AG04450 (cell line): ENCODE measurements at regions of chr6 and their contacts with region 1.

Region 1: GRCh38 chr6:30877419-30878371 is 6.6 kb upstream of the DDR1 start:
- DNase-seq: peak; percentile 71
- H3K4me3 ChIP-seq: peak overlapping the region; percentile 47
- H3K27ac ChIP-seq: peak overlapping the region; percentile 34
- H3K27me3 ChIP-seq: no peaks in the 10 kb centered on the region
- CTCF ChIP-seq: peak; percentile 95

Region 2: DNA sequence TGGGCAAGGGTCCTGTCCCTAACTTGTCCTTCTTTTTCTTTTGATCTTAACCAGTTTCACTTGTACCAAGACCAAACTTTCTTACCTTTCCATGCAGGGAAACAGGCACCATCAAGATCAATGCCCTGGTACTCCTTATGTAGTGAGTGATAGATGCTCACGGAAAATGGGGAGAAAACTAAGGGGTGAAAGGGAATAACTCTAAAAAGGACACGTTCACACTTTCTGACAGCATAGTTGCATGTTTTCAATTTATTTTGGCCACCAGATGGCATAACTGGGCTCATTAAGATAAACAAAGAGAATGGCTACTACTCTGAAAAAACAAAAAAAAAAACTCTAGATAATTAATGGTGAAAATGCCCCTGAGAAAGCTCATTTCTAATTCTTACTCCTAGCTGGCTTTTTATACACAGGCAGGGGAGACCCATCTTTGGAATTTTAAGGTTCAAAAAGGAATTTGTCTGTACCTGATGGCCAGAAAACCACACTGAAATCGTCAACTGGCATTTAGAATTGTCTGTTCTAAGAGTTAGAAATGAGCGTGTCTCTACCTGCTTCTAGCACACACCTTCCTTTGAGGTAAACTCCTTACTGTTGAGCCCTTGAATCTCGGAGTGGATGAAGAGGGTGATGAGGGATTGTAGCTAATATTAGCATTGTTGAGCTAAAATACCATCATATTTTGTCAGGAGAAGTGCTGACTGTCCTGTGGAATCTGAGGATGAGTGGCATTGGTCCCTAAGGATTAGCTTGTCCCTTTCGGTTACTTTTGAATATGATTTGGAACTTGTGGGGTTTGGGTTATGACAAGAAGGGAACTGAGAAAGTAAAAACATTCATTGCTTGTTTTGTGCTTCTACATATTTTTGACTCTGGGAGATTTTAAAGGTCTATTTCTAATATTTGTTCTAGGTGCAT is 55.6 kb before region 1 on chr6:
- CTCF ChIA-PET with region 1: interaction called, 50 read pairs
- POLR2A ChIA-PET with region 1: no interaction called
- DNase-seq: no peak
- H3K4me3 ChIP-seq: no peak overlapping the region
- H3K27ac ChIP-seq: peak overlapping the region; percentile 21
- H3K27me3 ChIP-seq: no peaks in the 10 kb centered on the region
- CTCF ChIP-seq: peak; percentile 58

Region 3: GRCh38 chr6:30828027-30828960 is 49.4 kb before region 1 on chr6:
- CTCF ChIA-PET with region 1: interaction called, 50 read pairs
- POLR2A ChIA-PET with region 1: no interaction called
- DNase-seq: peak; percentile 84
- H3K4me3 ChIP-seq: no peak overlapping the region
- H3K27ac ChIP-seq: peak overlapping the region; percentile 78
- H3K27me3 ChIP-seq: no peaks in the 10 kb centered on the region
- CTCF ChIP-seq: peak; percentile 97

Region 4: GRCh38 chr6:30844091-30844535 is 33.6 kb before region 1 on chr6:
- CTCF ChIA-PET with region 1: interaction called, 10 read pairs
- POLR2A ChIA-PET with region 1: interaction called, 4 read pairs
- DNase-seq: no peak
- H3K4me3 ChIP-seq: no peak overlapping the region
- H3K27ac ChIP-seq: no peak overlapping the region
- H3K27me3 ChIP-seq: peaks cover 6% of the 10 kb centered on the region
- CTCF ChIP-seq: 0 out of 2 replicates have a peak, but pooled peaks have one; percentile 25